ENCODE measurements at regions of chr2 and their contacts with region 1.

Region 1: GRCh38 chr2:74066518-74067203 is 81.1 kb downstream of the BOLA3 start:
- DNase-seq: no peak
- ATAC-seq: no peak
- H3K4me3 ChIP-seq: no peak overlapping the region
- H3K27ac ChIP-seq: no peak overlapping the region
- H3K4me1 ChIP-seq: no peaks in the 10 kb centered on the region
- H3K27me3 ChIP-seq: no peaks in the 10 kb centered on the region
- CTCF ChIP-seq: no peak
- EP300 ChIP-seq: no peak
- POLR2A ChIP-seq: no peak
- RAD21 ChIP-seq: no peak

Region 2: GRCh38 chr2:73877071-73877802 is 189.4 kb before region 1 on chr2:
- CTCF ChIA-PET with region 1: no interaction called
- POLR2A ChIA-PET with region 1: no interaction called
- RAD21 ChIA-PET with region 1: no interaction called
- SMC1A ChIA-PET with region 1: no interaction called
- in situ Hi-C with region 1: no loop called
- intact Hi-C with region 1: no loop called
- DNase-seq: no peak
- ATAC-seq: peak; percentile 73
- H3K4me3 ChIP-seq: 0 out of 2 replicates have a peak overlapping the region, but pooled peaks have one; percentile 3
- H3K27ac ChIP-seq: no peak overlapping the region
- H3K4me1 ChIP-seq: no peaks in the 10 kb centered on the region
- H3K27me3 ChIP-seq: no peaks in the 10 kb centered on the region
- CTCF ChIP-seq: no peak
- EP300 ChIP-seq: no peak
- POLR2A ChIP-seq: no peak
- RAD21 ChIP-seq: no peak

Region 3: DNA sequence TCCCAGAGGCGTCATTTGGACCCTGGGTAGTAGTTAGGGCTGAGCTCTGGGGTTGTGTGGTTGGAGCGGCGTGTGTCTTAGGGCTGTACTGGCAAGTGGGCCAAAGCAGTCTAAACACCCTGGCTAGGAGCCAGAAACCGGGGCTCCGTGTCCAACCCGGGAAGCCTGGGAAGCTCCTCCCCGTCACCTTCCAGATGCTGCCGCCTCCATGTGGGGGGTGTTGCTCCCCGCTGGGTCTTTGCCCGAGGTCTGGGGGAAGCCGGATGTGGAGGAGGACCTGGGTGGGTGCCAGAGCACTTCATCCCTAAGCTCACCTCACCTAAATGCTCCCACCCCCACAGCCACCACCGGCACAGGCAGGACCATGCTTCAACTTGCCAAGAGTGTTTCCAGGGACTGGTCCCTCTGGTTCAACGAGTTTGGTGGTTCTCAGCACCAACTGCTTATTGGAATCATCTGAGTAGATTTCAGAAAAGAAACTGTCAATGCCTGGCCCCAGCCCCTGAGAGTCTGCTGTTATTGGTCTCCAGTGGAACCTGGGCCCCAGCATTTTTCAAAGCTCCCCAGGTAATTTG is 56.5 kb before region 1 on chr2:
- CTCF ChIA-PET with region 1: no interaction called
- POLR2A ChIA-PET with region 1: no interaction called
- RAD21 ChIA-PET with region 1: no interaction called
- SMC1A ChIA-PET with region 1: no interaction called
- in situ Hi-C with region 1: no loop called
- intact Hi-C with region 1: no loop called
- DNase-seq: no peak
- ATAC-seq: no peak
- H3K4me3 ChIP-seq: no peak overlapping the region
- H3K27ac ChIP-seq: no peak overlapping the region
- H3K4me1 ChIP-seq: no peaks in the 10 kb centered on the region
- H3K27me3 ChIP-seq: no peaks in the 10 kb centered on the region
- CTCF ChIP-seq: no peak
- EP300 ChIP-seq: no peak
- POLR2A ChIP-seq: no peak
- RAD21 ChIP-seq: no peak

Region 4: GRCh38 chr2:74052732-74053597 is 13.7 kb before region 1 on chr2:
- CTCF ChIA-PET with region 1: interaction called, 5 read pairs
- POLR2A ChIA-PET with region 1: interaction called, 4 read pairs
- RAD21 ChIA-PET with region 1: interaction called, 3 read pairs
- SMC1A ChIA-PET with region 1: interaction called, 11 read pairs
- in situ Hi-C with region 1: no loop called
- intact Hi-C with region 1: no loop called
- DNase-seq: no peak
- ATAC-seq: peak; percentile 77
- H3K4me3 ChIP-seq: no peak overlapping the region
- H3K27ac ChIP-seq: no peak overlapping the region
- H3K4me1 ChIP-seq: peaks cover 19% of the 10 kb centered on the region
- H3K27me3 ChIP-seq: no peaks in the 10 kb centered on the region
- CTCF ChIP-seq: no peak
- EP300 ChIP-seq: no peak
- POLR2A ChIP-seq: no peak
- RAD21 ChIP-seq: no peak